Caco-2 (cell line): ENCODE measurements at regions of chr9 and their contacts with region 1.

Region 1: GRCh38 chr9:96612105-96612965 is 7.3 kb downstream of the CDC14B start:
- DNase-seq: peak; percentile 62 to 66
- H3K4me3 ChIP-seq: no peak overlapping the region
- H3K4me3 Mint-ChIP-seq: peak overlapping the region; percentile 54
- H3K27ac Mint-ChIP-seq: peak overlapping the region; percentile 77
- H3K4me1 ChIP-seq: peaks cover 38% of the 10 kb centered on the region
- H3K4me1 Mint-ChIP-seq: peaks cover 44% of the 10 kb centered on the region
- H3K27me3 ChIP-seq: no peaks in the 10 kb centered on the region
- H3K27me3 Mint-ChIP-seq: no peaks in the 10 kb centered on the region
- CTCF ChIP-seq: no peak

Region 2: DNA sequence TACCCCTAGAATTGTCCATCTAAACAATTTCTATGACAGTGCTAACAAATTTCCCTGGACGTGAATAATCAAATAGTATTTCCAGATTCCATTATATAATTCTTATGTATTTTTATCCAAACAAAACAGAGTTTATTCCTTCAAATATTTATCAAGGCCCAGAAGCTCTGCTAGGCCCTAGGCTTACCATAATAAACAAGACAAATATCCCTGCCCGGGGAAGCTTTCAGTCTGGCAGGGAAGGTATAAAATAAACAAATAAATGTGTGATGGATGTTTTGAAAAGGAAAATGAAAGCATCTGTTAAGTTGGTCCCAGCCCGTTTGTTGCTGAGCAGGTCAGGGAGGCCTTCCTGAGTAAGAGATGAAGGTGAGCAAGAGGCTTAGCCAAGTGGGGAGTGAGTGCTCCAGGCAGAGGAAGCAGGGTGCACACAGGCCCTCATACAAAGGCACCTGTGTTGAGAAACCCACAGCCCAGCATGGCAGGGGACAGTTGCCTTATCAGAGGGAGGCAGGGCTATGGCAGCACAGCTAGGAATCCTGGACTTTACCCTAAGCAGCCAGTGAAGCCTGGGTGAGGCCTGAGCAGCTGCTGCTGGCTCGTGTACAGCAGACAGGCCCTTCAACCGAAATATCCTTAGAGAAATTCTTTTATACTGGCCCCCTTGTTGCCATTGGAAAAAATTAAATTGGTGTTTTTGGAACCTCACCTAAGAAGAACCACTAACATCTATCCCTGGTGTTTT is 221.1 kb before region 1 on chr9:
- CTCF ChIA-PET with region 1: no interaction called
- POLR2A ChIA-PET with region 1: no interaction called
- intact Hi-C with region 1: no loop called
- DNase-seq: peak; percentile 84 to 91
- H3K4me3 ChIP-seq: no peak overlapping the region
- H3K4me3 Mint-ChIP-seq: no peak overlapping the region
- H3K27ac Mint-ChIP-seq: peak overlapping the region; percentile 87
- H3K4me1 ChIP-seq: peaks cover 37% of the 10 kb centered on the region
- H3K4me1 Mint-ChIP-seq: peaks cover 30% of the 10 kb centered on the region
- H3K27me3 ChIP-seq: no peaks in the 10 kb centered on the region
- H3K27me3 Mint-ChIP-seq: no peaks in the 10 kb centered on the region
- CTCF ChIP-seq: no peak

Region 3: GRCh38 chr9:96571681-96572080 is 40.7 kb before region 1 on chr9:
- CTCF ChIA-PET with region 1: interaction called, 4 read pairs
- POLR2A ChIA-PET with region 1: interaction called, 3 read pairs
- intact Hi-C with region 1: loop called (anchors 2 kb)
- DNase-seq: peak in 1 of 2 experiments; percentile 12
- H3K4me3 ChIP-seq: no peak overlapping the region
- H3K4me3 Mint-ChIP-seq: peak overlapping the region; percentile 58
- H3K27ac Mint-ChIP-seq: peak overlapping the region; percentile 28
- H3K4me1 ChIP-seq: peaks cover 37% of the 10 kb centered on the region
- H3K4me1 Mint-ChIP-seq: peaks cover 29% of the 10 kb centered on the region
- H3K27me3 ChIP-seq: no peaks in the 10 kb centered on the region
- H3K27me3 Mint-ChIP-seq: no peaks in the 10 kb centered on the region
- CTCF ChIP-seq: no peak

Region 4: DNA sequence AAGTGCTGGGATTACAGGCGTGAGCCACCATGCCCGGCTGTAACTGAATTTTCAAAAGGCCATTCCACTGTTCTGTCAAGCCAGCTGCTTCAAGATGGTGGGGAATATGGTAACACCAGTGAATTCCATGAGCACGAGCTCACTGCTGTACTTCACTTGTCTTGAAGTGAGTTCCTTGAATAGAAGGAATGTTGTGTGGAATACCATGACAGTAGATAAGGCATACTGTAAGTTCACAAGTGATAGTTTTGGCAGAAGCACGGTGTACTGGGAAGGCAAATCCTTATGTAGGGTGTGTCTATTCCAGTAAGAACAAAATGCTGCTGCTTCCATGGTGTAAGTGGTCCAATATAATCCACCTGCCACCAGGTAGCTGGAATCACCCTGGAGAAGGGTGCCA is 49.4 kb after region 1 on chr9:
- CTCF ChIA-PET with region 1: interaction called, 10 read pairs
- POLR2A ChIA-PET with region 1: no interaction called
- intact Hi-C with region 1: no loop called
- DNase-seq: peak in 1 of 2 experiments; percentile 49
- H3K4me3 ChIP-seq: no peak overlapping the region
- H3K4me3 Mint-ChIP-seq: no peak overlapping the region
- H3K27ac Mint-ChIP-seq: no peak overlapping the region
- H3K4me1 ChIP-seq: peaks cover 10% of the 10 kb centered on the region
- H3K4me1 Mint-ChIP-seq: peaks cover 23% of the 10 kb centered on the region
- H3K27me3 ChIP-seq: no peaks in the 10 kb centered on the region
- H3K27me3 Mint-ChIP-seq: no peaks in the 10 kb centered on the region
- CTCF ChIP-seq: no peak

Region 5: DNA sequence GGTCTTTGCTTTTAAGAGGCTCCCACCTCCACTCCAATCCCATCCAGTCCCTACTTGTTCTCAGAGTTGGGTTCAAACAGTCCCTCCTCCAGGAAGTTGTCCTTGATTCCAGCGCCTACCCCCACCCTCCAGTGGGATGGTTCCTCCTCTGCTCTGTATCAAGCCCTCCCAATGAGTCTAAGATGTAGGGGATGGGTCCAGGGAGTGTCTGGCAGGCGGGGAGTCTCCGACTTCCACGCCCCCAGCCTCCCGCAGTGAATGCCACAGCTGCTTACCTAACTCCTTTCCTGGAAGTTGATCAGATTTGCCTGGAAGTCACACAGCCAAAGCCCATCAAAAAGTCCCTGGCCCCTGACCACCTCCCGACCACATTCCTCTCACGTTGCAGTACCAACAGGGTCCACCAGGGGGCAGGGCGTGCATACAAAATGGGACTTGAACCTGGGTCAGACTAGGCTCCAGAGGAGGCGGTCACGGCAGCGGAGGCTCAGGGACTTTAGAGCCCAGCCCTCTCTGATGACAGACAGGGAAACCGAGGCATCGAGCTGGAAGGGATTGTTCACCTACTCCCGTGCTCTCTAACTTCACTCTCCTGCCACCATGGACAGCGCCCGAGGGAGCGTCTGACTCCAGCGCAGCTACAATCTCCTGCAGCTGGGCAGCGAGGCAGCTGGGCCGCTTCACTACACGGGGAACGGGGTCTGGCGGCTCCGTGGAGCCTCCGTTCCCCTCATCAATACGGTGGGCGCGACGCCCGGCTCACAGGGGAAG is 774.6 kb after region 1 on chr9:
- CTCF ChIA-PET with region 1: no interaction called
- POLR2A ChIA-PET with region 1: no interaction called
- intact Hi-C with region 1: no loop called
- DNase-seq: peak; percentile 79 to 81
- H3K4me3 ChIP-seq: no peak overlapping the region
- H3K4me3 Mint-ChIP-seq: no peak overlapping the region
- H3K27ac Mint-ChIP-seq: peak overlapping the region; percentile 89
- H3K4me1 ChIP-seq: peaks cover 70% of the 10 kb centered on the region
- H3K4me1 Mint-ChIP-seq: peaks cover 55% of the 10 kb centered on the region
- H3K27me3 ChIP-seq: no peaks in the 10 kb centered on the region
- H3K27me3 Mint-ChIP-seq: no peaks in the 10 kb centered on the region
- CTCF ChIP-seq: peak; percentile 91 to 97